ENCODE measurements at regions of chr17 and their contacts with region 1.

Region 1: DNA sequence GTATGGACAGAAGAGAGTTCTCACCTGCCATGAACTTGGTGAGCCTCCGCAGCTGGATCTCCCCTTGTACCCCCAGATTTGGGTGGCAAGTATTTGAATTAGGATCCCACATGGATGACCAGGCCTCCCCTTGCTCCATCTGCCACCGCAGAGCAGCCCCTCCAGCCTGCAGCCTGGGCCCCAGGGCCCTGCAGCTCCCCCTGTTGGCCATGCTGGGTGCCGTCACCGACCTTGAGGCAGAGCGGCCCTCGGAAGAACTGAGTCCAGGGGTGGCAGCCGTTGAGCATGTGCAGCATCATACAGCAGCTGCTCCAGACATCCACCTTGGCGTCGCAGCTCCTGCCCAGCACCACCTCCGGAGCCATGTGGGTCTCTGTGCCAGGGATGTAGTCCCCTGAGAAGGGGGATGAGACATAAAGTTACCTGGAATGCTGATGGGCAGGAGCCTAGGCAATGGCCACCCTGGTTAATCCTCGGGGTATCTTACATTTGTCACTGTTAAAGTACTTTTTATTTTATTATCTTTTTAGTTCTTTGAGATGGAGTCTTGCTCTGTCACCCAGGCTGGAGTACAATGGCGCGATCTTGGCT is 9.0 kb upstream of the SPATA32 start:
- DNase-seq: peak; percentile 44
- H3K4me3 Mint-ChIP-seq: no peak overlapping the region
- H3K27ac Mint-ChIP-seq: no peak overlapping the region
- H3K4me1 Mint-ChIP-seq: no peaks in the 10 kb centered on the region
- H3K27me3 Mint-ChIP-seq: no peaks in the 10 kb centered on the region

Region 2: DNA sequence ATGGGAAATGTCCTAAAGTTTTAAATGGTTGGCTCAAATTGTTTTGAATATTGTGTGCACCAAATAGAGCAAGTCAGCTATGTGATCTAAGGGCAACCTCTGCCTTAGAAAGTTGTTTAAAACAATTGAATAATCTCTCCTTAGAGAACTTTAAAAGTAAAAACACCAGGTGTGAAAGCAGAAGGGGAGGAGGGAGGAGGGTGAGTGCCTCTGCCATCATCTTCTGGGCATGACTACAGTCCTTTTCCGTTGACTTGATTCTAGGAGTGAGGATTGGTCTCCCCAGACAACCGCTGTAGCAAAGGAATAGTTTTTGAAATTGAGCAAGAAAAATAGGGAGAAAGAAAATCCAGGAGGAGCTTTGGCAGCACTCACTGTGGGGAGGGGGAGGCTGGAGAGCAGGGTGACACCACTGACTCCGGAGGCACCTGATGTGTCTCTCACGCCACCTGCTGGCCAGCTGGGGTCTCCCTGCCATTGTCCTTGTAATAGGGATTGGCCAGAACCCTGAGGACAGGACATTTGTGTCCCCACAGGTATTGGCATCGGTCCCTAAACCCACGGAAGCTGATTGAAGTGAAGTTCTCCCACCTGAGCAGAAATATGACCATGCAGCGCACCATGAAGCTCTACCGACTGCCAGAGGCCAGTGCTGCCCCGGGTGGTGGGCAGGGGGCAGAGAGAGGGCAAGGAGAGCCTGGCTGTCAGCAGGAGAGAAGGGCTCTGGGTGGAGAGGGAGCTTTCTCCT is 171.9 kb before region 1 on chr17:
- CTCF ChIA-PET with region 1: no interaction called
- POLR2A ChIA-PET with region 1: no interaction called
- DNase-seq: peak; percentile 79
- H3K4me3 Mint-ChIP-seq: no peak overlapping the region
- H3K27ac Mint-ChIP-seq: no peak overlapping the region
- H3K4me1 Mint-ChIP-seq: no peaks in the 10 kb centered on the region
- H3K27me3 Mint-ChIP-seq: no peaks in the 10 kb centered on the region

Region 3: GRCh38 chr17:45241328-45242011 is 29.5 kb before region 1 on chr17:
- CTCF ChIA-PET with region 1: no interaction called
- POLR2A ChIA-PET with region 1: no interaction called
- DNase-seq: no peak
- H3K4me3 Mint-ChIP-seq: no peak overlapping the region
- H3K27ac Mint-ChIP-seq: no peak overlapping the region
- H3K4me1 Mint-ChIP-seq: peaks cover 48% of the 10 kb centered on the region
- H3K27me3 Mint-ChIP-seq: no peaks in the 10 kb centered on the region

Region 4: DNA sequence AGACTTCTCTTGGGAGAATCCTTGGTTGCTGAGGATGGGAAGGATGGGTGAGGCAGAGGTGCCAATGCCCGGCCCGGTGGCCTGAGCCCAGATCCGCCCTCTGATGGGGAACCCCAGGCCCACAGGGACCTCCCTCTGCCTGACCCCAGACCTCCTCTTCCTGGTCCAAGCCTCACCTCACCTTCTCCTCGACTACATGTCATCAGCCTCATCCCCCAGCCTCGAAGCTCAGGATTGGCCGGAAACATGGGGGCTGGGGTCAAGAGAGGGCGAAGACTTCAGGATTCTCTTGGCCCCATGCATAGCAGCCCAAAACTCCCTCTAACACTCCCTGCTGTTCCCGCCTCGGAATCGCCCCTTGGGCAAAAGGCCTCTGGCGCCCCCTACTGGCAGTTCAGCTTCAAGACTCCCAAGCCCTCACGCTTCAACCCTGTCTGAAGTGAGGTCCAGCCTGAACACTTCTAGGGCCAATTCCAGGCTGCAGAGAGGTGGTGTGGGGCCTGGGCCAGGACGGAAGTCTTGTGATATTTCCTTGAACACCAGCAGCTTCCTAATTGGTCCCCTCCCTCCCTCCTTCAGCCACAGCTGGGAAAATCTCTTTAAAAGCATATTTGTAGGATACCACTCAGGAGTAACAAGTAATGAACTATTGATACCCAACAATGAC is 114.5 kb after region 1 on chr17:
- CTCF ChIA-PET with region 1: interaction called, 114 read pairs
- POLR2A ChIA-PET with region 1: interaction called, 19 read pairs
- DNase-seq: peak; percentile 90
- H3K4me3 Mint-ChIP-seq: no peak overlapping the region
- H3K27ac Mint-ChIP-seq: no peak overlapping the region
- H3K4me1 Mint-ChIP-seq: peaks cover 20% of the 10 kb centered on the region
- H3K27me3 Mint-ChIP-seq: peaks cover 28% of the 10 kb centered on the region